CD14-positive monocyte (primary cell): ENCODE measurements at regions of chr2 and their contacts with region 1.

Region 1: DNA sequence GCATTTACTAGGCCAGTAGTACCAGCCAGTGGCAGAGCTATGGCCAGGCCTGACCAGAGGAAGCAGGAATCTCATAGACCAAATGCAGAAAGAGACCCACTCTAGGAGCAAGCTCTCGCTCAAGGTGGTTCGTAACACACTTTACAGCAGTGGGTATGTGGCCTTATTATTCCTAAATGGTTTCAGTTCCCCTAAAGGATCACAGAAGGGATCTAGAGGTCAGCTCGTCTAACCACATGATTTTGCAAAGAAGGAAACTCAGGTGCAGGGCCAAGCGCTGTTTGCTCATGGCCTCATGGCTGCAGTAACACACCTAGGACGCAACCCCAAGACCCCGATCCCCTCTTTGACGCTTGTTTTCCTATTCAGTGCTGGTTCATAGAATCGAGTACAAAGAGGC is 65.5 kb upstream of the ATG16L1 start:
- DNase-seq: peak; percentile 46 to 80 (median 73)
- H3K4me3 ChIP-seq: peak overlapping the region in 1 of 3 experiments; percentile 16
- H3K4me3 Mint-ChIP-seq: peak overlapping the region in 1 of 2 donors; percentile 64
- H3K27ac ChIP-seq: peak overlapping the region; percentile 62 to 63
- H3K27ac Mint-ChIP-seq: peak overlapping the region; percentile 79 to 94 (median 85)
- H3K4me1 ChIP-seq: peaks cover 49 to 61% of the 10 kb centered on the region in 2 donors
- H3K4me1 Mint-ChIP-seq: peaks cover 61% of the 10 kb centered on the region
- H3K27me3 ChIP-seq: no peaks in the 10 kb centered on the region
- H3K27me3 Mint-ChIP-seq: peaks cover 0 to 3% (median 1%) of the 10 kb centered on the region in 3 donors
- CTCF ChIP-seq: no peak

Region 2: DNA sequence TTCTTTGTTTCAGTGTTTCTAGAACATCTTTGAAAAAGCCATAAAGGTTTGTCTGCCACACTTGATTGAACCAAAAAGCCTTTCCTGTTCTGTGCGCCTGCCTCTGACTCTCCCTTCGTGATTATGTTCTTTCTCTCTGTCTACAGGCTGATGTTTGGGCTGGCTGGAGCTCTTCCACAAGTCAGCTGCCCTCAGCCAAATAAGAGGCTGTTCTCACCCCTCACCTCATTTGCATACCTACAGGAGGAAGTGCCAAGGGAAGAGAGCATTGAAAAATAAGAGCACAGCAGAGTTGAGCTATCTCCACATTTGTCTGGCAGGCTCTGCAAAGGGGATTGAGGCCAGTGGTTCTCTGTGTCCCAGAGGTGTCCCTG is 110.0 kb before region 1 on chr2:
- intact Hi-C with region 1: no loop called
- DNase-seq: peak; percentile 64 to 76 (median 70)
- H3K4me3 ChIP-seq: peak overlapping the region in 1 of 3 experiments; percentile 55
- H3K4me3 Mint-ChIP-seq: no peak overlapping the region
- H3K27ac ChIP-seq: peak overlapping the region; percentile 64 to 82
- H3K27ac Mint-ChIP-seq: no peak overlapping the region
- H3K4me1 ChIP-seq: peaks cover 75 to 85% of the 10 kb centered on the region in 2 donors
- H3K4me1 Mint-ChIP-seq: peaks cover 34% of the 10 kb centered on the region
- H3K27me3 ChIP-seq: no peaks in the 10 kb centered on the region
- H3K27me3 Mint-ChIP-seq: no peaks in the 10 kb centered on the region
- CTCF ChIP-seq: no peak

Region 3: DNA sequence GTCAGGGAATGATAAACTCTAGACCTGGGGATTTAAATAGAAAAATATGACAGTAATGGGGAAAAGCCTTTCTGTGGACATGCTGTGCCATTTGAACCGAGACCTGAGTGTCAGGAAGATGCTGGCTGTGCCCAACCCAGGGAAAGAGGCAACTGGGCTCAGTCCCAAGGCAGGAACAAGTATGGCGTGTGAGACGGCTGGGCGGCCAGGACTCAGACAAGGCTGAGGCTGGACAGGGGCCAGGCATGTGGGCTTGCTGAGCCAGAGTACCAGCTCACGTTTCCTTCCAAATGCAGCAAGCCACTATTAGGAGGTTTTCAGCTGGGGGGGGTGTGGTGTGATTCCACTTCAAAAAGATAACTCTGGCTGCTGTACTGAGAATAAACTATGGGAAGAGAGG is 33.4 kb before region 1 on chr2:
- intact Hi-C with region 1: no loop called
- DNase-seq: no peak
- H3K4me3 ChIP-seq: no peak overlapping the region
- H3K4me3 Mint-ChIP-seq: no peak overlapping the region
- H3K27ac ChIP-seq: peak overlapping the region in 1 of 2 donors; percentile 51
- H3K27ac Mint-ChIP-seq: peak overlapping the region in 4 of 7 donors; percentile 2 to 26 (median 18)
- H3K4me1 ChIP-seq: no peaks in the 10 kb centered on the region
- H3K4me1 Mint-ChIP-seq: peaks cover 4% of the 10 kb centered on the region
- H3K27me3 ChIP-seq: no peaks in the 10 kb centered on the region
- H3K27me3 Mint-ChIP-seq: peaks cover 0 to 4% (median 1%) of the 10 kb centered on the region in 3 donors
- CTCF ChIP-seq: no peak

Region 4: DNA sequence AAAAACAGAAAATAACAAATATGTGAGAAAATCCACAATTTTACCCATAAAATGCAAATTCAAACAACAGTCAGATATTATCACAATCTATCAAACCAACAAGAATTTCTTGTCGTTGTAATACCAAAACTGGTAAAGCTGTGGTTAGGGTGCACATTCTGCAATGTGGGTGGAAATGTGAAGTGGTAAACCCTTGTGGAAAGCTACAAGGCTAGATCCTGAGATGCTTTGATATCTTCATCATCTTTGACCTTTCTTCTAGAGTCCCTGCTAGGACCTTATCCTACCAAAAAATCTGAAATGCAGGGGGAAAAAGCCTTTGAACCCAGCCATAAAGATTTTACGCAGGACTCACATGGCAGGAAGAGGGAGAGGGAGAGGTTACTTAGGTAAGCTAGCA is 48.3 kb after region 1 on chr2:
- intact Hi-C with region 1: loop called in 1 of 2 experiments (anchors 5 kb)
- DNase-seq: no peak
- H3K4me3 ChIP-seq: no peak overlapping the region
- H3K4me3 Mint-ChIP-seq: no peak overlapping the region
- H3K27ac ChIP-seq: no peak overlapping the region
- H3K27ac Mint-ChIP-seq: no peak overlapping the region
- H3K4me1 ChIP-seq: peaks cover 6 to 29% of the 10 kb centered on the region in 2 donors
- H3K4me1 Mint-ChIP-seq: peaks cover 30% of the 10 kb centered on the region
- H3K27me3 ChIP-seq: no peaks in the 10 kb centered on the region
- H3K27me3 Mint-ChIP-seq: peaks cover 2 to 5% (median 5%) of the 10 kb centered on the region in 3 donors
- CTCF ChIP-seq: no peak